ENCODE measurements at regions of chr12 and their contacts with region 1.

Region 1: DNA sequence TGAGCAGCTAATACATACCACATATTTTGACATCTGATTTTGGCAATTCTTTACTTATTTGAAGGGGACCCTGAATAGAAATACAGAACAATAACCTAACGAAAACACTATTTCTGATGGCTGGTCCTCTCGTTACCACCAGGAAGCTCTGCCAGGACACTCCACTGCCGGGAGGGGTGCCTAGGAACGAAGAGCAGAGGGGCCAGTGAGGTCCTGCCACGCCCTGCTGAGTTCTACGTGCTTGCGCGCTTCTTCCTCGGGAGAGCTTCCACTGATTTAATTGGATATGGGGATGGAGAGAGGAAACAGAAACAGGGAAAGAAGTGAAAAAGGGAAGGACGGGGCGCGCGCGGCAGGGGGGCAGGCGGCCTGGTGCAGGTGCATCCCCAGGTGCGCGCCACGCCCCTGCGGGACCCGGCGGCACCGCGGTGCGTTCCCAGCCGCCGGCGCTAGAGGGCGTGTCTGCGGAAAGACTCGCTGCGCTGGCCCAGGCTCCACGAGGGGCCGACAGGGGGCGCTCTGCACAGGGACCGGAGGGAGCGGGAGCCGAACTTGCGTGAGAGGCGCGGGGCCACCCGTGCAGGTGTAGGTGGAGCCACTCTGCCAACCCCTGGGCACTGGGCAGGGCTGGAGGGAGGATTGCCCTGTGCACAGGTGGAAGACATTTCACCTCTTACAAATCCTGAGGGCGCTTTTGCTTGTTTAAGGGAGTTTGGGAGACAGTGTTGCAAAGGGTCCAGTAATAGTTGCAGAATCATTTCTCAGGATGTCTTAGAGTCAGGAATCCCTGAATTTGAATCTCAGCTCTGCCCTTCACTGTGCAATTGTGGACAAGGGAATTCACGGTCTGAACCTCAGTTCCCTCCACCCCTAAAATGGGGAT is 986.3 kb upstream of the TMEM132C start:
- DNase-seq: peak; percentile 11 to 72 (median 32)
- ATAC-seq: peak in 1 of 4 donors; percentile 61
- H3K4me3 ChIP-seq: no peak overlapping the region
- H3K27ac ChIP-seq: no peak overlapping the region
- H3K4me1 ChIP-seq: no peaks in the 10 kb centered on the region
- H3K27me3 ChIP-seq: peaks cover 0 to 37% (median 9%) of the 10 kb centered on the region in 9 donors
- CTCF ChIP-seq: peak; percentile 62 to 87 (median 74)
- POLR2A ChIP-seq: no peak

Region 2: DNA sequence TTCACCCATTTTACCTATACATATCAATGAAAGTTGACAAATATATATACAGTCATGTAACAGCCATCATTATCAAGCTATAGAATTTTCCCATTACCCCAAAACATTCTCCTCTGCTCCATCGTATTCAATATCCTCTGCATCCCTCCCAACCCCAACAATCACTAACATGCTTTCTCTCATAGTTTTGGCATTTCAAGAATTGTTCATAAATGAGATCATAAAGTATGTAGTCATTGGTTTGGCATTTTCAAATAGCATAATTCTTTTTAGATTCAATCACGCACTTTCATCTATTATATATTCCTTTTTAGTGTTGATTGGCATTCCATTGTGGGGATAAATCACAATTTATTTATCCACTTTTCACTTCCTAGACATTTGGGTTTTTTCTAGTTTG is 120.4 kb after region 1 on chr12:
- intact Hi-C with region 1: no loop called
- DNase-seq: no peak
- ATAC-seq: no peak
- H3K4me3 ChIP-seq: no peak overlapping the region
- H3K27ac ChIP-seq: no peak overlapping the region
- H3K4me1 ChIP-seq: no peaks in the 10 kb centered on the region
- H3K27me3 ChIP-seq: peaks cover 0 to 16% (median 0%) of the 10 kb centered on the region in 9 donors
- CTCF ChIP-seq: no peak
- POLR2A ChIP-seq: no peak

Region 3: DNA sequence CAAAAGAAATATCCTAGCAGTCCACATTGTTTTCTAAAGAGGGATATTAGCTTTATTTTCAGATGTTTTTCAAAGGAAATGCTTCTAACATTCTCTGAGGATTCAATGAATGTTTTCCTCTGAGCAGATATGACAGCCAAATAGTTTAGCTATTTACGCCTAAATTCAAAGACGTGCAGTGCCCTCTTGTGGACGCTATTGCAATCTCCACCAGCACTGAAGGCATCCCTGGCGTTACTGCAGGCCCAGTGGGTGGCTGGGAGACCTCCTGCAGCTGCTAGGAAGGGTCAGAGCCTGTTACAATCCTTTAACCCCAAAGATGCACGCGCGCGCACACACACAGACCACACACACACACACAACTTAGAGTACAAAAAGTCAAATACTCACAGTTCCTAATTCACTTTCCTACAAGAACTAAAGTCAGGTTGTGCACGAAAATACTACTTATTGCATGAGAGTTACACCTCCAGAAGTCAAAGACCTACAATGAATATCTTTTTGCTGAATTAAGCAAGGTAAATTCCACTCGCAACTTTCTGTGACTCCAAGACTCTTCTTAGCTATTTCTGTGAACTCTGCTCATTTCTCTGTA is 397.0 kb after region 1 on chr12:
- intact Hi-C with region 1: loop called in 1 of 10 experiments (anchors 5 kb)
- DNase-seq: peak; percentile 35 to 64 (median 53)
- ATAC-seq: peak; percentile 51 to 67 (median 60)
- H3K4me3 ChIP-seq: no peak overlapping the region
- H3K27ac ChIP-seq: no peak overlapping the region
- H3K4me1 ChIP-seq: peaks cover 0 to 8% (median 0%) of the 10 kb centered on the region in 12 donors
- H3K27me3 ChIP-seq: no peaks in the 10 kb centered on the region
- CTCF ChIP-seq: peak; percentile 53 to 85 (median 68)
- POLR2A ChIP-seq: no peak